A549 (cell line): ENCODE measurements at regions of chr9 and their contacts with region 1.

Region 1: GRCh38 chr9:127943731-127944144 is 6.1 kb upstream of the DPM2 start:
- DNase-seq: peak; percentile 79 to 86
- ATAC-seq: peak; percentile 70 to 89
- H3K4me3 ChIP-seq: no peak overlapping the region
- H3K27ac ChIP-seq: peak overlapping the region; percentile 34 to 58; a peak in 4 of 6 replicates
- H3K4me1 ChIP-seq: peaks cover 18% of the 10 kb centered on the region; the same call in 2 of the 3 replicates
- CTCF ChIP-seq: peak; percentile 82
- EP300 ChIP-seq: no peak; a peak in 1 of 5 replicates
- POLR2A ChIP-seq: no peak
- RAD21 ChIP-seq: peak; percentile 93 to 95

Region 2: DNA sequence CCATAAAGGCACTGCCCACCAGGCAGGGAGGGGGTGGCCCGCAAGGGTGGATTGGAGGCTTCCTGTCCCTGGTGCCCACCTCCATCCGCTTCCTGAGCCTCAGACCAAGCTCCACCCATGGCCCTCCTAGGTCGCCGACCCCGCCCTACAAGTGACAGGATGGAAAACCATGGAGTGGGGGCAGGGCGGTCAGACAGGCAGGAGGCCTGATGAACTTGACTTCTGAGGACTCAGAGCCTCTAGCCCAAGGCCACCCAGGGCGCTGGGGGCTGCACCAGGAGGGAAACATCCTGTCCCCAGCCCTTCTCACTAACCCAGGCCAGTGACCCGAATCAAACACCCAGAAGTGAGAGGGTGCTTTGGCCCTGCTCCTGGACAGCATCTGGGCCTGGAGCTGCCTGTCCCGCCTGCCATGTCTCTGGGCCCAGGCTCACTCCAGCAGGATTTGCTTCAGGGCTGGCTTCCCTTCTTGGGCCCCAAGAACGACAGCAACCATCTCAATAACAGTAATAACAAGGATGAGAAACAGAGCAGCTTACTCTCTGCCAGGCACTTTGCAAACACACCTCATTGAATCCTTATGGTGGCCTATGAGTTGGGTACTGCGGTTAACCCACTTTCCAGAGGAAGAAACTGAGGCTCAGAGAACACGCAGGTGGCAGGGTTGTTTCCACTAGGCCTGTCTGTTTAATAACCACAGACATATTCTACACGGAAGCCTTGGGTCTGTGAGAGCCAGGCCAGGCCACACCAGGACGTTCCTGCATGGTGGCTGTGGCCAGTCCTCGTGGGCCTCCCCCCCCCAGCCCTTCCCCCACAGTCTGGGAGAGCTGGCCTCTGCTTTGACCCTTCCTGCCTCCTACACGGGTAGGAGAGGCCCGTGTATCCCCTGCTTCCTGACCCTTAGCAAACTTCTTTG is 39.9 kb before region 1 on chr9:
- CTCF ChIA-PET with region 1: no interaction called
- POLR2A ChIA-PET with region 1: no interaction called
- DNase-seq: no peak
- ATAC-seq: no peak
- H3K4me3 ChIP-seq: no peak overlapping the region
- H3K27ac ChIP-seq: peak overlapping the region in 1 of 2 experiments; percentile 40; a peak in 2 of 6 replicates
- H3K4me1 ChIP-seq: peaks cover 31% of the 10 kb centered on the region
- CTCF ChIP-seq: no peak
- EP300 ChIP-seq: no peak
- POLR2A ChIP-seq: no peak
- RAD21 ChIP-seq: no peak

Region 3: DNA sequence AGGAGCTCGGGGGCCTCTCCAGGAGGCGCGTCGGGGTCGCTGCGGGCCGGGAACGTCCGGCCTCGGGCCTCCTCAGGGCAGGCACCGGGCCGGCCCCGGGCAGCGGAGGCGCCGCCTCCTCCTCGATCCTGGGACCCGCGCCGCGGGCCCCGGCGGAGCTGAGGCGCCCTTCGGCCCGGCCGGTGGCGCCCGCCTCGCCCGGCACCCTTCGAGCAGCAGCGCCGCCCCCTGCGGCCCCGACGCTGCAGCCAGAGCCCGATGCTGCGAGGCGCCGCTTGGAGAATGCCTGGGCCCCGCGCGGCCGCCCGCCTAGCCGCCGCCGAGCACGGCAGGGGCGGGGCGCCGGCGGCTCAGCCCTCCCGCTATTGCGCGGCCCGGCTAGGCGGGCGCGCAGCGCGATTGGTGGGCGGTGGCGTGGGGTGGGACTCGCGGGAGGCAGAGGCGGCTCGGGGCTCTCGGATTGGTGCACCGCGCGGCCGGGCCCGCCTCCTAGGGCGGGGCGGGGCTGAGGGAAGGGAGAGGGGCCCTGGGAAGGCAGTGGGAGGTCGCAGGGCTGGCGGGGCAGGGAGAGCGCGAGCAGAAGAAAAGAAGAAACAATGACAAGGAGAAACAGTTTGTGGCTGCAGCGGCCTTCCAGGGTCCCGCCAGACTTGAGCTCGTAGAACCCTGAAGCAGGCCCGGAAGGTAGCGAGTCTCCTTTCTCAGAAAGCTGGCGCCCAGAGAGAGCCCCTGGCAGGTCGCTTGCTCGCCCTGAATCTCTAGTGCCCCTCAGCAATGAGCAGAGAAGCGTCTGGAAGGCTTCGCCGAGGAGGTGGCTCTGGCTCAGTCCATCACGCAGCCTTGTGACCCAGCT is 37.2 kb after region 1 on chr9 and contains the start of gene EEIG1:
- CTCF ChIA-PET with region 1: interaction called, 173 read pairs
- POLR2A ChIA-PET with region 1: no interaction called
- DNase-seq: peak; percentile 85 to 88
- ATAC-seq: peak; percentile 85 to 94
- H3K4me3 ChIP-seq: peak within 1 kb of the TSS; percentile 91
- H3K27ac ChIP-seq: peak within 1 kb of the TSS; percentile 97 to 98
- H3K4me1 ChIP-seq: peaks cover 44% of the 10 kb centered on the region
- CTCF ChIP-seq: no peak
- EP300 ChIP-seq: no peak
- POLR2A ChIP-seq: peak; percentile 78
- RAD21 ChIP-seq: peak in 1 of 2 experiments; percentile 10; a peak in 1 of 5 replicates
- polyA plus RNA-seq, gene EEIG1: 24.4 and 30.3 TPM in 2 replicates

Region 4: DNA sequence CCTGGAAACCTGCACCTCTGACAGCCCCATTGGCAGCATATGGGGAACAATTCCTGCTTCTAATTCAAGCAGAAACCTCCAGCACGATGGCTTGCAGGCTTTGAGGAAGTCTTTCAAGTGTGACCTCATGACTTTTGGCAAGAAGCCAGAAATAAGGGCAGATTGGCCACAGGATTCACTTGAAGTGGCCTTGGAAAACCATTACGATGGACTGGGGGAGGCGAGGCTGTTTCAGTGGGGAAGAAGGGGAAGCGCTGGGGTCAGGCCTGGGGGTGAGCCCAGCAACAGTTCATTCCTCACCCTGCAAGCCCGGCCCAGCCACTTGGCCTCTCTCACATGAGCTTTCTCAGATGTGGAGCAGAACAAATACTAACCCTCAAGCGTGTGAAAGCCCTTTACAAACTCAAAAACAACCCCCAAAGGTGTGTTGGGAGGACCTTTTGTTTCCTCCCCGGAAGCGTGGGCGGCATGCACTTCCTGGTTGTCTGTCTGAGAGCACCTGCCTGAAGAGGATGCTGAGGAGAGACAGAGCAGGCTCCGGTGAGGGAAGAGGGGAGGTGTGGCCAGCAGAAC is 63.9 kb after region 1 on chr9:
- CTCF ChIA-PET with region 1: interaction called, 69 read pairs
- POLR2A ChIA-PET with region 1: no interaction called
- DNase-seq: peak in 1 of 2 experiments; percentile 89
- ATAC-seq: peak; percentile 19 to 39; a peak in 4 of 6 replicates
- H3K4me3 ChIP-seq: no peak overlapping the region
- H3K27ac ChIP-seq: peak overlapping the region; percentile 75 to 91
- H3K4me1 ChIP-seq: peaks cover 46% of the 10 kb centered on the region
- CTCF ChIP-seq: no peak
- EP300 ChIP-seq: no peak
- POLR2A ChIP-seq: no peak
- RAD21 ChIP-seq: 0 out of 5 replicates have a peak, but pooled peaks of 1 of the 2 experiments have one; percentile 8

Region 5: DNA sequence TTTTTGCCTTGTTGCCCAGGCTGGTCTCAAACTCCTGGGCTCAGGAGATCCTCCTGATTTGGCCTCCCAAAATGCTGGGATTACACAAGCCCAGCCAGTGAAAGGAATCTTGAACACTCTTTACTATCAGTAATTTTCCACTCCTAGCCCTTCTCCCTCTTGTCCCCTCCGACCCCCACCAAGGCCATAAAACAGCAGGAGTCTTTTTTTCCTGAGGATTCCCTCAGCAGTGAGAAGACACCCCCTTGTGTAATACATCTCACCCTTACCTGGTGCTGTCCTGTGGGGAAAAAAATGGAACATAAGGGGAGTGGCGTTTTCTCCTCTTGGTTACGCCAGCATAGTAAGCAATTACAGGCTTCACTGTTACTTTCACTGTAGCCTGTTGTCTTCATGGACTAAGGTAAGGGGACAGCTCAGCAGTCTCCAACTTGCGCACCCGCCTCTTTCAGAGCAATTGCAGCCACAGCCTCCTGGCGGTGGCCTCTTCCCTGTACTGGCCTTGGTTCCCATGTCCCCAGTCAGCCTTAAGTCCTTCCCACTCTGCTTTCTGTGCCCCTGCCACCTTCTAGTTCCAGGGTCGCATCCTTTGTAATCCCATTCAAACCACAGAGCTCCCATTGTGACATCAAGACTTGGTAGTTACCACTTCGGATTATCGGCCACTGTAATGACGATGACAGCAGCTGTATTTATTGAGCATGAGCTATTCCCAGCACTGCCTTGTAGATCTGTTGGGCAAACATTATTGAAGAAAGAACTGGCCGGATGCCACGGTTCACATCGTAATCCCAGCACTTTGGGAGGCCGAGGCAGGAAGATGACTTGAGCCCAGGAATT is 113.4 kb after region 1 on chr9:
- CTCF ChIA-PET with region 1: interaction called, 827 read pairs
- POLR2A ChIA-PET with region 1: no interaction called
- DNase-seq: no peak
- ATAC-seq: peak; percentile 48; a peak in 3 of 6 replicates
- H3K4me3 ChIP-seq: no peak overlapping the region
- H3K27ac ChIP-seq: peak overlapping the region; percentile 25 to 32; a peak in 1 of 6 replicates
- H3K4me1 ChIP-seq: peaks cover 20% of the 10 kb centered on the region
- CTCF ChIP-seq: no peak
- EP300 ChIP-seq: no peak
- POLR2A ChIP-seq: no peak
- RAD21 ChIP-seq: no peak

Region 6: GRCh38 chr9:128081056-128081455 is 137.3 kb after region 1 on chr9:
- CTCF ChIA-PET with region 1: interaction called, 26 read pairs
- POLR2A ChIA-PET with region 1: no interaction called
- DNase-seq: no peak
- ATAC-seq: peak in 1 of 2 experiments; percentile 24; a peak in 2 of 6 replicates
- H3K4me3 ChIP-seq: no peak overlapping the region
- H3K27ac ChIP-seq: peak overlapping the region; percentile 80 to 88
- H3K4me1 ChIP-seq: peaks cover 55% of the 10 kb centered on the region
- CTCF ChIP-seq: no peak
- EP300 ChIP-seq: no peak
- POLR2A ChIP-seq: no peak
- RAD21 ChIP-seq: no peak

Region 7: GRCh38 chr9:128094166-128094967 is 150.6 kb after region 1 on chr9:
- CTCF ChIA-PET with region 1: interaction called, 49 read pairs
- POLR2A ChIA-PET with region 1: no interaction called
- DNase-seq: peak; percentile 94
- ATAC-seq: peak; percentile 75 to 83
- H3K4me3 ChIP-seq: no peak overlapping the region
- H3K27ac ChIP-seq: peak overlapping the region; percentile 20 to 68; a peak in 4 of 6 replicates
- H3K4me1 ChIP-seq: peaks cover 35% of the 10 kb centered on the region
- CTCF ChIP-seq: no peak
- EP300 ChIP-seq: no peak
- POLR2A ChIP-seq: no peak
- RAD21 ChIP-seq: no peak